ENCODE measurements at regions of chr1 and their contacts with region 1.

Region 1: DNA sequence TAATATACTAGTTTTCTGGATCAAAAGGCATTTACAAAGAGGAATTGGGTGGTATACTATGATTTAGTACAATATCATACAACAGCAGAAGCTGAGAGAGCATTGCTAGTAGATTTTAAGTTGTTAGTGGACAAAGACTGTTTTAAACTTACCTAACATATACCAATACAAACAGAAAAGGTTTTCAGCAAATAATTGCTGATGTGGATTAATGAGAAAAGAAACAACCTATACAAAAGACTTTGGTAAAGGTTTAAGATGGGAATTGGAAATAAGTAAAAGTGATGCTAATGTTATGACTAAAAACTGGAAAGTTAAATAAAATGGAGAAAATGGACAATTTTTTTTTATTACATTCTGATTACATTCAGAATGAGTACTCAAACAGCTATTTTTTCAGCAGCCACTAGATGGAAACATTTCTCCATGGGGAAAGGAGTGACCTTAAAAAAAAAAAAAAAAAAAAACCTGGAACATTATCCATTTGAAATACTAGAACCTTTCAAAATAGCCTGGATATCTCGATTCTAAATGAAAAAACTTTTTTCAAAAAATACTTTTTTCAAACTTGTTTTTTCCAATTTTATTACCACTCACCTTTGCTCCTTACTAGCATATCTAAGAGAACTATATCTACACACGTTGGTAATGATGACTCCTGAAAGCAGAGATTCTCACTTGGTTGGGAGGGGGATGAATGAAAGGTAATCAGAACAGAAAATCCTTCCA is 55.4 kb downstream of the EPRS1 start:
- DNase-seq: peak; percentile 51
- H3K4me3 ChIP-seq: no peak overlapping the region
- H3K27ac ChIP-seq: no peak overlapping the region
- H3K4me1 ChIP-seq: no peaks in the 10 kb centered on the region
- CTCF ChIP-seq: peak; percentile 86

Region 2: DNA sequence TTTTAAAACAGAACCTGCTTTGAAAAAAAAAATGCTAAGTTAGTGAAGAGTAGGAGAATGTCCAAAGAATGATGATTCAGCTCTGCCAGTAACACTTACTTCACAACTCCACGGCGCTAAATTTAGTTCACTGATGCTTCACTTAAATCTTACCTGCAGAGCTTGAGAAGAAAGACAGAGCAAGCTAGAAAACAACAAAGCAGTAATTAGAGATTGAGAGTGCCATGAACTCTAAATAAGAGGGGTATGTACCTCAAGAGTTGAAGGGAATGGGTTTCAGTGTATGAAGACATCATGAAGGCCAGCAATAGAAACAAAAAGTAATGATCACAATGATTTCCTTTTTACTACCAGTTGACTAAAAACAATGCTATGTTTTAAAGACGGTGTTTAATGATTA is 22.6 kb after region 1 on chr1:
- CTCF ChIA-PET with region 1: no interaction called
- POLR2A ChIA-PET with region 1: interaction called, 12 read pairs
- intact Hi-C with region 1: no loop called
- DNase-seq: no peak
- H3K4me3 ChIP-seq: no peak overlapping the region
- H3K27ac ChIP-seq: no peak overlapping the region
- H3K4me1 ChIP-seq: peaks cover 11% of the 10 kb centered on the region
- CTCF ChIP-seq: no peak

Region 3: DNA sequence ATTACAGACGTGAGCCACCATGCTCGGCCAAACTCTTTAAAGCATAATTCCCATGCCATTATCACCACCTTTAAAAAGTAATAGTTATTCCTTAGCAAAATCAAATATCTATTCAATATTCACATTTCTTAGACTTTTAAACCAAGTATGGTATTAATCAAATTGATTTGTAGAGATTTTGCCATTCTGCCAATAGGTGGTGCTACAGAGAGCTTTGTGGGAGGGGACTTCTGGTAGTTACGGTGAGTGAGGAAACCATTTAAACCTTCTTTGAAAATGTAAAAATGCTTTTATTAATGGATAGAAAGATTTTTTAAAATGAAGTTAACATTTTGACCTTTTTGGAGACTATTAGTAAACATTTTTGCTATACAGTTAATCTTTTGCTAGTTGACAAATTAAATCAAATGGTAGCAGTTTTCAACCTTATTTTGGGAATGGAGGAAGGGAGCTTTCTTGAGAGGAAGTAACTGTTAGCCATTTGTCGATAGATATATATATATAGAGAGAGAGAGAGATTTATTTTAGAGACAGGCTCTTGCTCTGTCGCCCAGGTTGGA is 122.3 kb after region 1 on chr1:
- CTCF ChIA-PET with region 1: no interaction called
- POLR2A ChIA-PET with region 1: interaction called, 5 read pairs
- intact Hi-C with region 1: loop called (anchors 5 kb)
- DNase-seq: peak; percentile 54
- H3K4me3 ChIP-seq: no peak overlapping the region
- H3K27ac ChIP-seq: no peak overlapping the region
- H3K4me1 ChIP-seq: no peaks in the 10 kb centered on the region
- CTCF ChIP-seq: peak; percentile 89

Measured in OCI-LY7 (cell line).